ENCODE measurements at regions of chr13 and their contacts with region 1.

Region 1: DNA sequence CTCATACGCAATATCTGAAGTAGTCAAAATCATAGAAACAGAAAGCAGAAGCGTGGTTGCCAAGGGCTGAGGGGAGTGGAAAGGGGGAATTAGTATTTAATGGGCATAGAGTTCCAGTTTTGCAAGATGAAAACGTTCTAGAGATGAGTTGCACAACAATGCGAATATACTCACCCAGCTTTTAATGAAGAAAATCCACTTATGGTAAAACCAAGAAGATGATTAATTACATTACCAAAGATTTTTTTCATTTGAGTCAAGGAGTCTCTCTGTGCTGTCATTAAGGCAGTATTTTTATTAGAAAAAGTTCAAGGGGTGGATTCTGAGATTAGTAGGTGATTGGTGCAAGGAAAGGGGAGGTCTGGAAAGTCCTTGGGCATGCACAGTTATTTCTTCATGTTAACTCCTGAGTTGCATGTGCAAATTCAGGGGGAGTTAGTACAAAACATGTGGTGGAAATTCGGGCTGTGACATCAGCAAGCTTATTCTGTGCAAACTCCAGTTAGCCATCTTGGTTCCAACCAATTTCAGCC is 6.9 kb upstream of the CBY2 start:
- DNase-seq: peak; percentile 68
- H3K4me3 Mint-ChIP-seq: no peak overlapping the region
- H3K27ac Mint-ChIP-seq: peak overlapping the region; percentile 78
- H3K4me1 Mint-ChIP-seq: peaks cover 23% of the 10 kb centered on the region
- H3K27me3 Mint-ChIP-seq: peaks cover 8% of the 10 kb centered on the region

Region 2: GRCh38 chr13:46176756-46177155 is 481.5 kb after region 1 on chr13:
- CTCF ChIA-PET with region 1: no interaction called
- POLR2A ChIA-PET with region 1: no interaction called
- intact Hi-C with region 1: loop called (anchors 5 kb)
- DNase-seq: no peak
- H3K4me3 Mint-ChIP-seq: peak overlapping the region; percentile 97
- H3K27ac Mint-ChIP-seq: peak overlapping the region; percentile 96
- H3K4me1 Mint-ChIP-seq: peaks cover 66% of the 10 kb centered on the region
- H3K27me3 Mint-ChIP-seq: no peaks in the 10 kb centered on the region

Measured in activated CD4-positive, alpha-beta memory T cell treated with anti-CD3 and anti-CD28 coated beads for 36 hours (primary cell).